ENCODE measurements at regions of chr7 and their contacts with region 1.

Region 1: GRCh38 chr7:127585044-127585953 is at the start of gene GCC1:
- DNase-seq: peak; percentile 87 to 98 (median 93)
- ATAC-seq: peak; percentile 87
- H3K4me3 ChIP-seq: peak within 1 kb of the TSS; percentile 87
- H3K4me3 Mint-ChIP-seq: peak within 1 kb of the TSS; percentile 86 to 98 (median 92)
- H3K27ac ChIP-seq: peak within 1 kb of the TSS; percentile 88
- H3K27ac Mint-ChIP-seq: peak within 1 kb of the TSS; percentile 77 to 97 (median 94)
- H3K4me1 ChIP-seq: peaks cover 47 to 55% of the 10 kb centered on the region in 2 donors
- H3K4me1 Mint-ChIP-seq: peaks cover 55 to 88% (median 78%) of the 10 kb centered on the region in 7 donors
- H3K27me3 ChIP-seq: no peaks in the 10 kb centered on the region
- H3K27me3 Mint-ChIP-seq: no peaks in the 10 kb centered on the region
- total RNA-seq, gene GCC1: 19.6 to 31.3 (median 23.7) TPM

Region 2: DNA sequence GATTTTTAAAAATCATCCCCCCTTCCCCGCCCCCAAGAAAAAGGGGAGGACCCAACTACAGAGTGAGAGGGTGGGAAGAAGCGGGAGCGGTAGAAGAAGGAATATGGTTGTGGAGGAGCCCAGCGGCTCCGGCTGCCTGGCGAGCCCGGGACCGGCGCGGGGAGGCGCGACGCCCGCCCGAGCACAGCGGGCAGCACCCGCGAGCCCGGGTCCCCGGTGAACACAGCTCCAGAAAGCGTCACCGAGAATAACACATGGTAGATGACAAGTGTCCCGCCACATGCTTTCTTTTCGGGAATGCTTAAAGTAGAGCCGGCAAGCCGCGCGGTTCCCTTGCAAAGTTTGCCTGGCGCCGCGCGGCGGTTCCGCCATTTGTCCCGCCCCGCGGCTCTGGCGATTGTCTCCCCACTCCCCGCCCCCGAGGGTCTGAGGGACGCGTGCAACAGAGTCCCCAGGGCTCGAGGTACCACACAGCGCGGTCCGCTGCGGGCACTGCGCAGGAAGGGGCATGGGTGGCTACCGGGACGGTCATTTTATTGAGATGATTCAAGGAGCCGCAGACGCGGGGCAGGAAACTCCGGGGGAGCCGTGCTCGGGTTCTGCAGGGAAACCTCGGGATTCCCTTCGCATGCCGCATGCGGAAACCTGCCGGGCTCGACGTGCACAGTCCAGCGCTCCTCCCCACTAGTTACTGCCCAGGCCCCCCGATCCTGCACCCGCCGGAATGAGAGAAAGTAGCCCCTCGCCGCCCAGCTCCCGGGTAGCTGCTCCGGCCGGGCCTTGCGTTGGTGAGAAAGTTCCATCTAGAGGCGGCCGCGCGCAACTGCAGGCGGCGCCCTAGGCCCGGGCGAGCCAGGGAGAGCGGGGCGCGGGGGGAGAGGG is 331.8 kb before region 1 on chr7:
- CTCF ChIA-PET with region 1: no interaction called
- POLR2A ChIA-PET with region 1: no interaction called
- intact Hi-C with region 1: loop called in 1 of 2 experiments (anchors 2 kb)
- DNase-seq: peak; percentile 13 to 64 (median 41)
- ATAC-seq: peak; percentile 84
- H3K4me3 ChIP-seq: peak overlapping the region; percentile 76
- H3K4me3 Mint-ChIP-seq: peak overlapping the region; percentile 76 to 93 (median 88)
- H3K27ac ChIP-seq: no peak overlapping the region
- H3K27ac Mint-ChIP-seq: no peak overlapping the region
- H3K4me1 ChIP-seq: peaks cover 12 to 16% of the 10 kb centered on the region in 2 donors
- H3K4me1 Mint-ChIP-seq: peaks cover 12 to 32% (median 25%) of the 10 kb centered on the region in 7 donors
- H3K27me3 ChIP-seq: peaks cover 3 to 27% of the 10 kb centered on the region in 2 donors
- H3K27me3 Mint-ChIP-seq: peaks cover 65 to 83% (median 73%) of the 10 kb centered on the region in 5 donors

Region 3: DNA sequence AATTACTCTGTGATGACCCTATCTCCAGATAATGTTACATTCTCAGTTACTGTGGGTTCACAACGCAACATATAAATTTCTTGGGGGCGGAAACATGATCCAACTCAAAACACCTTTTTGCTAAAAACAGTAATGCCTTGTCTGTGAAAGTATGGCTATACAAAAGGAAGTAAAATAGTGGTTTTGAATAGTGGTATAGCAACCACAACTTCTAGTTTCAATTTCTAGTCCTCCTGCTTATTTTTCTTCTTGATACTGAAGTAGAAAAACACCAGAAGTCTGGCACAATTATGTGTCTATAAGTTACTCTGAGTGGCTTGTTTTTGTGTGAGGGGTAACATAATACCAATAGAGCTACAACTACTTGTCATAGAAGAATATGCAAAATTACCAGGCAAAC is 171.3 kb before region 1 on chr7:
- CTCF ChIA-PET with region 1: no interaction called
- POLR2A ChIA-PET with region 1: interaction called, 8 read pairs
- intact Hi-C with region 1: loop called in 1 of 2 experiments (anchors 5 kb)
- DNase-seq: peak in 7 of 9 donors; percentile 37 to 76 (median 67)
- ATAC-seq: peak; percentile 88
- H3K4me3 ChIP-seq: peak overlapping the region; percentile 5
- H3K4me3 Mint-ChIP-seq: peak overlapping the region; percentile 57 to 87 (median 74)
- H3K27ac ChIP-seq: peak overlapping the region; percentile 61
- H3K27ac Mint-ChIP-seq: peak overlapping the region; percentile 88 to 99 (median 95)
- H3K4me1 ChIP-seq: peaks cover 20 to 45% of the 10 kb centered on the region in 2 donors
- H3K4me1 Mint-ChIP-seq: peaks cover 45 to 74% (median 68%) of the 10 kb centered on the region in 7 donors
- H3K27me3 ChIP-seq: no peaks in the 10 kb centered on the region
- H3K27me3 Mint-ChIP-seq: peaks cover 0 to 14% (median 0%) of the 10 kb centered on the region in 5 donors

Region 4: DNA sequence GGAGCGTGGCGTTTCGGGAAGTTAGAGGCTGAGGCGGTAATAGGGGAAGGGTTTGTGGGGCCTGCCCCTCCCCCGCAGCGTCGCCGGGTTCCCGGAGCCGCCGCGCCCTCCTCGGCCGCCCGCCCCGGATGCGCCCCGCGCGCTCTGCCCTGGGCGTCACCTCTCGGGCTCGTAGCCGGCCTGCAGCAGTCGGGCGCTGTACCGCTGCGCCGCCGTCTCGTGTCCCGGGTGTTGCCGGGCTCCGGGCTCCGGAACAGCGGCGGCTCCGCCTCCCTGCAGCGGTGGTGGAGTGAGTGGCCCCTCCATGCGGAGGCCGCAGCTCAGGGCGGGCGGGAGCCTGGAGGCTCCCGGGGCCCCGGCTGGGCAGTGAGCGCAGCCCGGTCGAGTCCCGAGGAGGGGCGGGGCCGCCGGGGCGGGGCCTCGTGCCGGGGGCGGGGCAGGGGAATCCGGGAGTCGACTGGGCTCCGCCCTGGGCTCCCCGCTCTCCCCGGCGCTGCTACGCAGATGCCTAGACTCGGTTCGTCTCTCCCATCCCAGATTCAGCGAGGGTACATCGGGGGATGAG is 824.4 kb after region 1 on chr7 and contains the start of gene IMPDH1:
- CTCF ChIA-PET with region 1: no interaction called
- POLR2A ChIA-PET with region 1: no interaction called
- intact Hi-C with region 1: loop called in 1 of 2 experiments (anchors 5 kb)
- DNase-seq: peak; percentile 73 to 95 (median 83)
- ATAC-seq: peak; percentile 87
- H3K4me3 ChIP-seq: peak within 1 kb of the TSS; percentile 89
- H3K4me3 Mint-ChIP-seq: peak within 1 kb of the TSS; percentile 88 to 95 (median 92)
- H3K27ac ChIP-seq: peak within 1 kb of the TSS; percentile 81
- H3K27ac Mint-ChIP-seq: peak within 1 kb of the TSS; percentile 87 to 93 (median 90)
- H3K4me1 ChIP-seq: peaks cover 15 to 27% of the 10 kb centered on the region in 2 donors
- H3K4me1 Mint-ChIP-seq: peaks cover 12 to 41% (median 38%) of the 10 kb centered on the region in 7 donors
- H3K27me3 ChIP-seq: no peaks in the 10 kb centered on the region
- H3K27me3 Mint-ChIP-seq: peaks cover 0 to 26% (median 0%) of the 10 kb centered on the region in 5 donors
- total RNA-seq, gene IMPDH1: 36.5 to 92.0 (median 44.4) TPM

Region 5: DNA sequence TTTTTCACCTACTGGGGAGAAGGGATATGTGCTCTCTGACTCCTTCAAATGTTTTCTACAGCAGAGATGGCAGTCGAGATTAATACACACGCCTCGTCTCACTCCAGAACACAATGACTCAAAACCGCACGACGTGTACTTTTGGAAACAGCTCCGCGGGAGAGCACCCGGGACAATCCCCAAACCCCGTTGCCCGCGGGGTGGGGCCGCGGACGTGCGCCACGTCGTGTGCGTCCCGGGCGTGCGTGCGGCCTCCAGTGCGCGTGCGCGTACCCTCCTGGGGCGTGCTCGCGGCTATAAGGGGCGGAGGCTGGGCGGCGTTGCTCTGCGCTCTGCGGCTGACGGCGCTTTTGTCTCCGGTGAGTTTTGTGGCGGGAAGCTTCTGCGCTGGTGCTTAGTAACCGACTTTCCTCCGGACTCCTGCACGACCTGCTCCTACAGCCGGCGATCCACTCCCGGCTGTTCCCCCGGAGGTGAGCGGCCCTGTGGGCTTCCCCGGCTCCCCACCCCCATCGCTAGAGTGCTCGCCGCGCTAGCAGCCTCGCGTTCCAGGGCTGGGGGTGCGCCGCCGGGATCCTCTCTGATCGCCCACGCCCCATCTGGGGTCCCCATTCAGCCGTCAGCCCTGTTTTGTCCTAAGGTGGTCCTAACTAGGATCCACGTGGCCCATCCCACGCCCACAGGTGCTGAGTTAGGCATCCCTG is 870.4 kb after region 1 on chr7 and contains the start of gene HILPDA:
- CTCF ChIA-PET with region 1: no interaction called
- POLR2A ChIA-PET with region 1: no interaction called
- intact Hi-C with region 1: loop called (anchors 5 kb)
- DNase-seq: peak; percentile 90 to 98 (median 93)
- ATAC-seq: peak; percentile 95
- H3K4me3 ChIP-seq: peak within 1 kb of the TSS; percentile 85
- H3K4me3 Mint-ChIP-seq: peak within 1 kb of the TSS; percentile 81 to 96 (median 92)
- H3K27ac ChIP-seq: peak within 1 kb of the TSS; percentile 83
- H3K27ac Mint-ChIP-seq: peak within 1 kb of the TSS; percentile 72 to 98 (median 89)
- H3K4me1 ChIP-seq: peaks cover 12 to 22% of the 10 kb centered on the region in 2 donors
- H3K4me1 Mint-ChIP-seq: peaks cover 13 to 65% (median 22%) of the 10 kb centered on the region in 7 donors
- H3K27me3 ChIP-seq: no peaks in the 10 kb centered on the region
- H3K27me3 Mint-ChIP-seq: peaks cover 0 to 8% (median 0%) of the 10 kb centered on the region in 5 donors
- total RNA-seq, gene HILPDA: 2.4 to 39.5 (median 4.4) TPM